ENCODE measurements at regions of chr21 and their contacts with region 1.

Region 1: DNA sequence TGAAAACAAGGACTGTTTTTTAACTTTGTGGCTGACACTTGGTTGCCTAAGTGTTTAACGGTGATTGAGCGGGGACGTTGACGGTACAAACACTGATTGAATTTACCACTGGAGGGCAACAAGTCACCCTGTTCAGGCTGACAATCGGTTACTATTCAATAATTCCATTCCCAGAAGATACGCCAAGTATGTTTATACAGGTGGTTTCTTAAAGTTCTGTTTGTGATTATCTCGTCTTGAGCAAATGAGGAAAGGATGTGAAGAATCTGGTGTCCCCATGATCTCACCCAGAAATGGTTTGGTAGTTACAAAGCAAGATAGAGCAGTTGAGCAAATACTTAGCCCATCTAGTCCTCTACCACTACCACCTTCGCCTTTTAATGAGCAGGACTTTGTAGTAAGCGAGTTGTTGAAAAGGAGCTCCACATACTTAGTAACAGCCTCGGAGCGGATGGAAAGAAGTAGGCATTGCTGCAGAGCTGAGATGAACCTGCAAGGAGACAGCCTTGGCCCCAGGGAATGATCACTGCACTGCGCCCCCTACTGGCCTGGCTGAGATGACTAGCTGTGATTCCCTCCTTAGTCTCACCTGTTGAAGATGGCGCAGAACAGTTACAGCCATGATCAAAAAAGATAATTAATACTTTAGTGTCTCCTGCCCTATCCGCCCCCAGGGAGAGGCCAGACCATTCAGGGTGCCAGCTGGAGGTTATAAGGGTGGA is 36.3 kb downstream of the IFNAR1 start:
- DNase-seq: peak; percentile 80
- H3K4me3 ChIP-seq: no peak overlapping the region
- H3K27ac ChIP-seq: peak overlapping the region; percentile 4 to 55 (median 36)
- H3K4me1 ChIP-seq: peaks cover 0 to 19% (median 12%) of the 10 kb centered on the region in 4 donors
- H3K27me3 ChIP-seq: no peaks in the 10 kb centered on the region
- CTCF ChIP-seq: peak; percentile 61 to 83 (median 80)
- EP300 ChIP-seq: no peak
- POLR2A ChIP-seq: no peak

Region 2: GRCh38 chr21:33380483-33380998 is 19.5 kb after region 1 on chr21:
- intact Hi-C with region 1: no loop called
- DNase-seq: peak; percentile 90
- H3K4me3 ChIP-seq: no peak overlapping the region
- H3K27ac ChIP-seq: peak overlapping the region; percentile 65 to 75 (median 71)
- H3K4me1 ChIP-seq: peaks cover 0 to 27% (median 19%) of the 10 kb centered on the region in 4 donors
- H3K27me3 ChIP-seq: no peaks in the 10 kb centered on the region
- CTCF ChIP-seq: no peak
- EP300 ChIP-seq: no peak
- POLR2A ChIP-seq: peak in 1 of 2 donors; percentile 18

Region 3: DNA sequence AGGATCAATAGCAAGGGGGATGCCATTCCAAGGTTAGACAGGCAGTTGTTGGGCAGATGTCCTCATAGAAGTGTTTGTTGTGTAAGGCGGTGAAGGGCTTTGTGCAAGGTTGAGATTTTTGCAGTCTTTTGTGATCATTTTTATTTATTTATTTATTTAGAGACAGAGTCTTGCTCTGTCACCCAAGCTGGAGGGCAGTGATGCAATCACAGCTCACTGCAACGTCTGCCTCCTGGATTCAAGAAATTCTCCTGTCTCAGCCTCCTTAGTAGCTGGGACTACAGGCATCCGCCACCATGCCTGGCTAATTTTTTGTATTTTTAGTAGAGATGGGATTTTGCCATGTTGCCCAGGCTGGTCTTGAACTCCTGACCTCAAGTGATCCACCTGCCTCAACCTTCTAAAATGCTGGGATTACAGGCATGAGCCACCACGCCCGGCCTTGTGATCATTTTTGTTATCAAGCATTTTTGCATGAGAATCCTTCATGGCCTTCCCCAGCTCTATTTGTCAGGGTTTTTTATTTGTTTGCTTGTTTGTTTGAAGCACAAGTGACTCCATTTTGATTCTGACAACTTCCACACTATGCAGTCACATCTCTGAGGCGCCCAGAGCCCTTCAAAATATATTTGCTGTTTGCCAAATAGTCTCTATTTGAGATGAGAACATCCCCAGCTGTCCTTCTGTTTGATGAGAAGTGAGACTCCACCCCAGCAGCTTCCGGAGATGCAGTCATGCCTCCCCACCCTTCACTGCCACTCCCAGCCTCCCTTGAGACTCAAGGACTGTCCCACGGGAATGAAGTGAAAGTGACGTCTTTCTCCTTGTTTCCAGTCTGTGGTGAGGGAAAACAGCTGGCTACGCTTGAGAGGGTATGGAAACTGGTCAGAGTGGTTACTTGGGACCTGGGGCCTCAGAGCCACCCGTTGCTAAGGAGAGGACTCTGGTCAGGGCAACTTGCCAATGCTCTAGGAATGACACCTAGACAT is 80.7 kb after region 1 on chr21:
- intact Hi-C with region 1: loop called (anchors 2 kb)
- DNase-seq: no peak
- H3K4me3 ChIP-seq: no peak overlapping the region
- H3K27ac ChIP-seq: peak overlapping the region in 3 of 4 donors; percentile 39 to 47 (median 45)
- H3K4me1 ChIP-seq: peaks cover 0 to 15% (median 7%) of the 10 kb centered on the region in 4 donors
- H3K27me3 ChIP-seq: no peaks in the 10 kb centered on the region
- CTCF ChIP-seq: no peak
- EP300 ChIP-seq: no peak
- POLR2A ChIP-seq: no peak

Region 4: DNA sequence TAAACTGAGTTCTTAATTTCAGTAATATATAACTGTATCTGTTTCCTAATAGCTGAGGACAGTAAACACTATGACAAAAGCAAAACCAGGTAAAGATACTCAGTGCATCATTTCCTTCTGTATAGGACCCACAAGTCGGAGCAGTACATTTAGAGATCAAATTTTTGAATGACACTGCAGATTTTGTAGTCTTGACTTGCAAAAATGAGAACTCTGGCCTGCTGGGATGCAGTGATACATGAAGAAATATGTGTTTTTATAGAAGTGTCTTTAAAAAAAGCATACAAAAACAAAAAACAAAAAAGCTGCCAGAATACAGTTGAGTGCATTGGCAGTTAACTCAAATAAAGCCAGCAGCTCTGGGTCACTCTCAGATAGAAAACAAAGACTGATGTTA is 161.9 kb after region 1 on chr21:
- intact Hi-C with region 1: no loop called
- DNase-seq: no peak
- H3K4me3 ChIP-seq: no peak overlapping the region
- H3K27ac ChIP-seq: no peak overlapping the region
- H3K4me1 ChIP-seq: no peaks in the 10 kb centered on the region
- H3K27me3 ChIP-seq: no peaks in the 10 kb centered on the region
- CTCF ChIP-seq: no peak
- EP300 ChIP-seq: no peak
- POLR2A ChIP-seq: no peak